Activated CD8-positive, alpha-beta T cell treated with anti-CD3 and anti-CD28 coated beads, Interleukin-2, amount 10 ng/mL, durations not matched to agents 7 days and 5 days (primary cell): ENCODE measurements at regions of chr9 and their contacts with region 1.

Region 1: GRCh38 chr9:89522261-89522958 is 24.5 kb upstream of the SEMA4D start:
- DNase-seq: peak; percentile 93
- ATAC-seq: peak; percentile 91
- H3K4me3 Mint-ChIP-seq: peak overlapping the region; percentile 51
- H3K27ac Mint-ChIP-seq: peak overlapping the region; percentile 95
- H3K4me1 Mint-ChIP-seq: peaks cover 94% of the 10 kb centered on the region
- H3K27me3 Mint-ChIP-seq: no peaks in the 10 kb centered on the region

Region 2: GRCh38 chr9:89477811-89478630 is 44.4 kb before region 1 on chr9:
- CTCF ChIA-PET with region 1: interaction called, 3 read pairs
- POLR2A ChIA-PET with region 1: interaction called, 16 read pairs
- DNase-seq: peak; percentile 67
- ATAC-seq: peak; percentile 57
- H3K4me3 Mint-ChIP-seq: peak overlapping the region; percentile 71
- H3K27ac Mint-ChIP-seq: peak overlapping the region; percentile 91
- H3K4me1 Mint-ChIP-seq: peaks cover 91% of the 10 kb centered on the region
- H3K27me3 Mint-ChIP-seq: no peaks in the 10 kb centered on the region

Region 3: GRCh38 chr9:89483592-89484522 is 38.6 kb before region 1 on chr9:
- CTCF ChIA-PET with region 1: interaction called, 3 read pairs
- POLR2A ChIA-PET with region 1: interaction called, 16 read pairs
- DNase-seq: peak; percentile 84
- ATAC-seq: peak; percentile 70
- H3K4me3 Mint-ChIP-seq: peak overlapping the region; percentile 72
- H3K27ac Mint-ChIP-seq: peak overlapping the region; percentile 96
- H3K4me1 Mint-ChIP-seq: peaks cover 90% of the 10 kb centered on the region
- H3K27me3 Mint-ChIP-seq: no peaks in the 10 kb centered on the region

Region 4: GRCh38 chr9:89497978-89498851 is 24.2 kb before region 1 on chr9 and contains the start of gene SEMA4D:
- CTCF ChIA-PET with region 1: interaction called, 21 read pairs
- POLR2A ChIA-PET with region 1: interaction called, 25 read pairs
- DNase-seq: peak; percentile 78
- ATAC-seq: peak; percentile 7
- H3K4me3 Mint-ChIP-seq: peak within 1 kb of the TSS; percentile 92
- H3K27ac Mint-ChIP-seq: peak within 1 kb of the TSS; percentile 94
- H3K4me1 Mint-ChIP-seq: peaks cover 75% of the 10 kb centered on the region
- H3K27me3 Mint-ChIP-seq: no peaks in the 10 kb centered on the region
- total RNA-seq, gene SEMA4D: 314 to 321 TPM

Region 5: DNA sequence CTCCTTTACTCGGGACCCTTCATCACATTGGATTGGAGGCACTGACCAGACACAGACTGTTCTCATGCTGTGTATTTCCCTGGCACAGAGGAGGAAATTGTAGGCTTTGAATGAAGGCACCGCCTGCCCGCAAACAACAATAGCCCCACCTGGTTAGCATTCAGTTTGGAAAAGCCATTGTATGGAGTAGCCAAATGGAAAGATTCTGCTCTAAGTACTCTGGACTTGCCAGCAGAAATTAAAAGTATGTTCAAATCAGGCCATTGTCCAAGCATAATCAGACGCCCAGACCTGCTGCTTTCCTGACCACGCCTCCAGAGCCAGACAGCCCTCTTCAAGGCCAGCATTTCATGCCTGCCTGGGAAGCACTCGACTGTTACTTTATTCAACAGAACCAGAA is 16.5 kb before region 1 on chr9:
- CTCF ChIA-PET with region 1: interaction called, 50 read pairs
- POLR2A ChIA-PET with region 1: interaction called, 25 read pairs
- DNase-seq: no peak
- ATAC-seq: no peak
- H3K4me3 Mint-ChIP-seq: no peak overlapping the region
- H3K27ac Mint-ChIP-seq: no peak overlapping the region
- H3K4me1 Mint-ChIP-seq: peaks cover 93% of the 10 kb centered on the region
- H3K27me3 Mint-ChIP-seq: no peaks in the 10 kb centered on the region

Region 6: DNA sequence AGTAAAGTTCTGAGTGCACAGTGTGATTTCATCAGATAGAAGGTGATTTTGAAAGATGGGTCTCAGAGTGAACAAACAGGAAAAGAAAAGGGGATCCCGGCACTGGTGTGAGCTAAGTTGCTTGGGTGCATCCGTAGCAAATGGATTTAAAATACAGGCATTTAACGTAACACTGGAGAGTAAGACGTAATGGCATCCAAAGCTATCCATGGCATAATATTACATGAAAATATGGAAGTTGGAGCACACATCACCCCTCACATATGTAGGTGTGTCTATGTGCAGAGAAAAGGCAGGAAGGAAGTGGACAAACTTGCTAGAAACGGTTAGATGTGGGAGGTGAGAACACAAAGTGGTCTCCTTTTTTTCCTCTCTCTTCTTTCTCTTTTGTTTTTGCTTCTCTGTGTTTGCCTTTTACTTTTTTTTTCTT is 13.8 kb after region 1 on chr9:
- CTCF ChIA-PET with region 1: interaction called, 17 read pairs
- POLR2A ChIA-PET with region 1: interaction called, 42 read pairs
- DNase-seq: peak; percentile 64
- ATAC-seq: peak; percentile 78
- H3K4me3 Mint-ChIP-seq: peak overlapping the region; percentile 64
- H3K27ac Mint-ChIP-seq: peak overlapping the region; percentile 89
- H3K4me1 Mint-ChIP-seq: peaks cover 90% of the 10 kb centered on the region
- H3K27me3 Mint-ChIP-seq: no peaks in the 10 kb centered on the region